ENCODE measurements at regions of chr19 and their contacts with region 1.

Region 1: GRCh38 chr19:53103198-53103944 is at the start of gene ZNF160:
- DNase-seq: peak; percentile 94
- ATAC-seq: peak; percentile 97
- H3K4me3 ChIP-seq: peak within 1 kb of the TSS; percentile 70
- H3K27ac ChIP-seq: peak within 1 kb of the TSS; percentile 87
- H3K4me1 ChIP-seq: no peaks in the 10 kb centered on the region
- H3K27me3 ChIP-seq: no peaks in the 10 kb centered on the region
- CTCF ChIP-seq: no peak
- POLR2A ChIP-seq: peak; percentile 93
- RAD21 ChIP-seq: no peak
- total RNA-seq, gene ZNF160: 26.9 and 30.8 TPM in 2 replicates

Region 2: GRCh38 chr19:52897144-52897935 is 206.0 kb before region 1 on chr19 and contains the start of gene ZNF320:
- CTCF ChIA-PET with region 1: no interaction called
- POLR2A ChIA-PET with region 1: no interaction called
- dilution Hi-C with region 1: no loop called
- in situ Hi-C with region 1: no loop called
- intact Hi-C with region 1: loop called (anchors 2 kb)
- DNase-seq: peak; percentile 87
- ATAC-seq: peak; percentile 100
- H3K4me3 ChIP-seq: peak within 1 kb of the TSS; percentile 78
- H3K27ac ChIP-seq: peak within 1 kb of the TSS; percentile 89
- H3K4me1 ChIP-seq: 0 out of 2 replicates have a peak, but pooled peaks cover 2% of the 10 kb centered on the region
- H3K27me3 ChIP-seq: no peaks in the 10 kb centered on the region
- CTCF ChIP-seq: no peak
- POLR2A ChIP-seq: peak; percentile 61; the same call in 1 of the 2 replicates
- RAD21 ChIP-seq: no peak
- total RNA-seq, gene ZNF320: 4.7 and 5.0 TPM in 2 replicates

Region 3: GRCh38 chr19:52993323-52994178 is 109.8 kb before region 1 on chr19:
- CTCF ChIA-PET with region 1: no interaction called
- POLR2A ChIA-PET with region 1: no interaction called
- dilution Hi-C with region 1: no loop called
- in situ Hi-C with region 1: no loop called
- intact Hi-C with region 1: loop called (anchors 1 kb)
- DNase-seq: peak; percentile 66
- ATAC-seq: peak; percentile 93
- H3K4me3 ChIP-seq: peak overlapping the region; percentile 59
- H3K27ac ChIP-seq: peak overlapping the region; percentile 58
- H3K4me1 ChIP-seq: 0 out of 2 replicates have a peak, but pooled peaks cover 3% of the 10 kb centered on the region
- H3K27me3 ChIP-seq: no peaks in the 10 kb centered on the region
- CTCF ChIP-seq: peak; percentile 59
- POLR2A ChIP-seq: no peak
- RAD21 ChIP-seq: no peak; the same call in 1 of the 2 replicates

Region 4: DNA sequence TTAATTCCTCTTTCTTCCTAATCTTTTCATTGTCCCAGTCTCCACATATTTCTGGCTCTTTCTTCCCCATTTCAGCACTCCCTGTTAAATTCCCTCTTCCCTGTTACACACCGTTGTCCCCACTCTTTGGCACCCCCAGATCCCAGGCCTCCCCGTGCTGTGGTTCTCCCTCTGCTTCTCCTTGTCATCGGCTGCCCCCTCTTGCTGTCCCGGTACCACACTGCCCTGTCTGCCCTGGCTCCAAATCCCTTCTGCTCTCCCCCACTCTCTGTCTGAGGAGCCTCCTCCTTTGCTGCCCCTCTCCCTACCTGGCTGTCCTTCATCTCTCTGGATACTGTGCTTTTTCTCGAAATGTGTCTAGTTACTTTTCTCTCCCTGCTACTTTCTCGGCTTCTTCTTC is 28.4 kb after region 1 on chr19:
- CTCF ChIA-PET with region 1: no interaction called
- POLR2A ChIA-PET with region 1: no interaction called
- dilution Hi-C with region 1: no loop called
- in situ Hi-C with region 1: no loop called
- intact Hi-C with region 1: loop called (anchors 2 kb)
- DNase-seq: no peak
- ATAC-seq: 0 out of 2 replicates have a peak, but pooled peaks have one; percentile 8
- H3K4me3 ChIP-seq: peak overlapping the region; percentile 57
- H3K27ac ChIP-seq: no peak overlapping the region
- H3K4me1 ChIP-seq: peaks cover 3% of the 10 kb centered on the region; the same call in 1 of the 2 replicates
- H3K27me3 ChIP-seq: no peaks in the 10 kb centered on the region
- CTCF ChIP-seq: no peak
- POLR2A ChIP-seq: no peak
- RAD21 ChIP-seq: no peak

Region 5: GRCh38 chr19:53158119-53158656 is 54.8 kb after region 1 on chr19:
- CTCF ChIA-PET with region 1: no interaction called
- POLR2A ChIA-PET with region 1: no interaction called
- dilution Hi-C with region 1: no loop called
- in situ Hi-C with region 1: no loop called
- intact Hi-C with region 1: loop called (anchors 2 kb)
- DNase-seq: peak; percentile 15
- ATAC-seq: peak; percentile 36
- H3K4me3 ChIP-seq: peak overlapping the region; percentile 59
- H3K27ac ChIP-seq: peak overlapping the region; percentile 52; the same call in 1 of the 2 replicates
- H3K4me1 ChIP-seq: peaks cover 2% of the 10 kb centered on the region; the same call in 1 of the 2 replicates
- H3K27me3 ChIP-seq: no peaks in the 10 kb centered on the region
- CTCF ChIP-seq: no peak
- POLR2A ChIP-seq: no peak
- RAD21 ChIP-seq: no peak

Measured in IMR-90 (cell line).